ENCODE measurements at regions of chr1 and their contacts with region 1.

Region 1: DNA sequence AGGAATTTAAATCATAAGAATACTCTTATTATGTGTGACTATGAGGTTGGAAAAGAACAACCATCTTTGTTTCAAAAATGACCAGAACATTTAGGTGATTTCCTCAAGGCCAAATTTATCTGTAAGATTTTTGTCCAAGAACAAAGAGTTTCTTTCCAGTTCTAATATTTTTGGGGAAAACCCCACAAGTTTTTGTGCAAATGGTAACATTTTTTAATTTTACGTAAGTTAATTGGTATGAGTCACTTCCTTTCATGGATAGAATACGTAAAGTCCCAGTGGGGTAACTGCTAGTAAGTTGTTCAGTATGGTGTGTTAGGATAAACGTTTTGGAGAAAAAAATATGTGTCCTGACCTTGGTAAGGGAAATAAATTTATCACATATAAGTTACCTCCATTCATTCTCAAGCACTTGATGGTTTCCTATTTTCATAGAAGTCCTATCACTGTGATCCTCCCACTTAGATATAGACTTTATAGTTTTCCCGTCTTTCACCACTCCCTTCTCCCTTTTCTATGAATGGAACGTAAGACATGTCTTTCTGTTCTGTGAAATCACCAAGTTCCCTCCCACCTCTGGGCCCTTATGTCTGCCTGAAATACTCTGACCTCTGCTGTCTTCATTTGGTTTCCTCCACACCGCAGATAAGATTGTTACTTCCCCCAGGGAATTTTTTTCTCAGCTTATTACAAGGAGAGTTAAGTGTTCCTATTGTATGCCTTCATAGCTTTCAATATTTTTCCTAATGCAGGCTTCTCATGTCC is 34.9 kb upstream of the TSNAX start:
- DNase-seq: peak in 1 of 35 experiments; percentile 2
- ATAC-seq: no peak
- H3K4me3 ChIP-seq: no peak overlapping the region
- H3K4me3 Mint-ChIP-seq: no peak overlapping the region
- H3K27ac ChIP-seq: no peak overlapping the region
- H3K27ac Mint-ChIP-seq: no peak overlapping the region
- H3K4me1 ChIP-seq: no peaks in the 10 kb centered on the region
- H3K4me1 Mint-ChIP-seq: peaks cover 0 to 3% (median 0%) of the 10 kb centered on the region in 3 donors
- H3K27me3 ChIP-seq: peaks cover 0 to 4% of the 10 kb centered on the region in 2 experiments
- H3K27me3 Mint-ChIP-seq: peaks cover 0 to 6% of the 10 kb centered on the region in 2 donors

Region 2: GRCh38 chr1:231192620-231193163 is 300.9 kb before region 1 on chr1:
- CTCF ChIA-PET with region 1: no interaction called
- POLR2A ChIA-PET with region 1: no interaction called
- DNase-seq: no peak
- ATAC-seq: no peak
- H3K4me3 ChIP-seq: no peak overlapping the region
- H3K4me3 Mint-ChIP-seq: no peak overlapping the region
- H3K27ac ChIP-seq: no peak overlapping the region
- H3K27ac Mint-ChIP-seq: no peak overlapping the region
- H3K4me1 ChIP-seq: no peaks in the 10 kb centered on the region
- H3K4me1 Mint-ChIP-seq: no peaks in the 10 kb centered on the region
- H3K27me3 ChIP-seq: peaks cover 2 to 35% of the 10 kb centered on the region in 2 experiments
- H3K27me3 Mint-ChIP-seq: peaks cover 20 to 35% of the 10 kb centered on the region in 2 donors

Region 3: GRCh38 chr1:231763456-231763855 is 269.9 kb after region 1 on chr1:
- CTCF ChIA-PET with region 1: no interaction called
- POLR2A ChIA-PET with region 1: interaction called in 1 of 2 experiments, 11 read pairs
- DNase-seq: no peak
- ATAC-seq: no peak
- H3K4me3 ChIP-seq: no peak overlapping the region
- H3K4me3 Mint-ChIP-seq: no peak overlapping the region
- H3K27ac ChIP-seq: no peak overlapping the region
- H3K27ac Mint-ChIP-seq: no peak overlapping the region
- H3K4me1 ChIP-seq: no peaks in the 10 kb centered on the region
- H3K4me1 Mint-ChIP-seq: no peaks in the 10 kb centered on the region
- H3K27me3 ChIP-seq: no peaks in the 10 kb centered on the region
- H3K27me3 Mint-ChIP-seq: no peaks in the 10 kb centered on the region